Lower leg skin (tissue), 4 donors: ENCODE measurements at regions of chr22 and their contacts with region 1.

Region 1: DNA sequence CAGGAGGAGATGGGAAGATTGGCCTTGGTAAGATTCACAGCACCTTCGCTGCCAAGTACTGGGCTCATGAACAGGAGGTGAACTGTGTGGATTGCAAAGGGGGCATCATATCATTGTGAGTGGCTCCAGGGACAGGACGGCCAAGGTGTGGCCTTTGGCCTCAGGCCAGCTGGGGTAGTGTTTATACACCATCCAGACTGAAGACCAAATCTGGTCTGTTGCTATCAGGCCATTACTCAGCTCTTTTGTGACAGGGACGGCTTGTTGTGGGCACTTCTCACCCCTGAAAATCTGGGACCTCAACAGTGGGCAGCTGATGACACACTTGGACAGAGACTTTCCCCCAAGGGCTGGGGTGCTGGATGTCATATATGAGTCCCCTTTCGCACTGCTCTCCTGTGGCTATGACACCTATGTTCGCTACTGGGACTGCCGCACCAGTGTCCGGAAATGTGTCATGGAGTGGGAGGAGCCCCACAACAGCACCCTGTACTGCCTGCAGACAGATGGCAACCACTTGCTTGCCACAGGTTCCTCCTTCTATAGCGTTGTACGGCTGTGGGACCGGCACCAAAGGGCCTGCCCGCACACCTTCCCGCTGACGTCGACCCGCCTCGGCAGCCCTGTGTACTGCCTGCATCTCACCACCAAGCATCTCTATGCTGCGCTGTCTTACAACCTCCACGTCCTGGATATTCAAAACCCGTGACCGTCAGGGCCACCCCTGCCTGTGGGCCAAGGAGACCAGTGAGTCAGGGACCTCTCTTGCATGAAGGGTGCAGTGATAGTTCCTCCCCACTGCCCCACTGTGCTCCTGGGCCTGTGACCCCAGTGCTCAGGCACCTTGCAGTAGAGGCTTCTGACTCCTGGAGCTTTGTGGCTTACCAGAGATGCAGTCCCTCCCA is 83.6 kb downstream of the BCR start:
- DNase-seq: no peak
- H3K4me3 ChIP-seq: no peak overlapping the region
- CTCF ChIP-seq: no peak
- POLR2A ChIP-seq: no peak

Region 2: DNA sequence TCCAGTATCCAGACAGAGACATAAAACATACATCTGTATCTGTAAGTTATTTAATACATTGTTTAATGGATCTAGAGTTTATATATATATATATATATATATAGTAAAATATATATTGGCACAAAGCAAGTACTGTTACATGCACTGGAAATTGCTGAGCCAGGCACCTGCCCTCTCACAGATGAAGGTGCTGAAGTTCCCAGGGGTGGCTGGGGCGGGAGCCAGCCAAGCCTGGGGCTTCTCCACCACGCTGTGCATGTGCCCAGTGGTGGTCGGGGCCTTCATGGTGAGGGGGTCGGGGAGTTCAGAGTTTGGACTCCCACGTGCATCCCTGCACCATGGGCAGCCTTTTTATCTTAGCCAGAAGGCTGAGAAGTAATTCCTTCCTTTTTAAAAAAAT is 35.7 kb after region 1 on chr22:
- intact Hi-C with region 1: loop called (anchors 5 kb)
- DNase-seq: no peak
- H3K4me3 ChIP-seq: no peak overlapping the region
- CTCF ChIP-seq: no peak
- POLR2A ChIP-seq: no peak